HEK293 (cell line): ENCODE measurements at regions of chr6 and their contacts with region 1.

Region 1: GRCh38 chr6:149082286-149082707 is 235.2 kb upstream of the TAB2 start:
- H3K4me3 ChIP-seq: no peak overlapping the region
- H3K27ac ChIP-seq: no peak overlapping the region
- H3K4me1 ChIP-seq: peaks cover 11% of the 10 kb centered on the region
- CTCF ChIP-seq: peak; percentile 78

Region 2: GRCh38 chr6:149094156-149094555 is 11.9 kb after region 1 on chr6:
- CTCF ChIA-PET with region 1: interaction called, 11 read pairs
- POLR2A ChIA-PET with region 1: no interaction called
- H3K4me3 ChIP-seq: no peak overlapping the region
- H3K27ac ChIP-seq: no peak overlapping the region
- H3K4me1 ChIP-seq: peaks cover 2% of the 10 kb centered on the region; the same call in 1 of the 2 replicates
- CTCF ChIP-seq: no peak